Activated CD4-positive, alpha-beta T cell treated with anti-CD3 and anti-CD28 coated beads, Interleukin-2, amount 10 ng/mL, durations not matched to agents 24 days and 14 days (primary cell): ENCODE measurements at regions of chr22 and their contacts with region 1.

Region 1: DNA sequence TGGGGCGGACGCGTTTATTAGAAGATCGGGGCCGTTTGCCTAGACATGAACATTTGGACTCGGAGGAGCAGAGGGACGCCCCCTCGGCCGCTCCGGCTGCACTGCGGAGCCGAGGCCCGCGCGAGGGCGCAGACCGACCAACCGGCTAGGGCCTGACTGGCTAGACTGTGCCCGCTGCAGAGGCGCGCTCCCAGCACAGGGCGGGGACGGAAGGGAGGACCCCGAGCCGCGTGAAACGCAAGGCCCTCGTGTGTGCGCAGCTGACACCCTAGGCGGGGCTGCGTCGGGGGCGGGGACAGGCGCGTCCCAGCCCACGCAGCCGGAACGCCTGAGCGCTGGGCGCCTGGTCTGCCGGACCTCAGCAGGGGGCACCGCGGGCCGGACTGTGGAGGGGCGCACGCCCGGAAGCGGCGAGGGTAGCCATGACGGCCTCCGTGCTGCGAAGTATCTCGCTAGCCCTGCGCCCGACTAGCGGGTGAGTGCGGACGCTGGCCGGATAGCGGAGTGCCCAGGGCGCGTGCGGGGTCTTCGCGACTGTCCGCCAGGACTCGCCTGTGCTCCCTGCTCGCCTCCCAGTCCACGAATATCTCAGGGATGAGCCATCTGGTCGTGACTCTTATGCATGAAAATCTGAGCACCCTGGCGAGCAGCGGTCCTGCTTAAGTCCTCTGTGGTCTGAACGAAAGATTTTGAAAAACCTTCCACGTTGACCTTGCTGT is at the start of gene MRPL40:
- DNase-seq: peak; percentile 97
- H3K4me3 Mint-ChIP-seq: peak within 1 kb of the TSS; percentile 92
- H3K27ac Mint-ChIP-seq: peak within 1 kb of the TSS; percentile 96
- H3K4me1 Mint-ChIP-seq: peaks cover 33% of the 10 kb centered on the region
- H3K27me3 Mint-ChIP-seq: no peaks in the 10 kb centered on the region
- total RNA-seq, gene MRPL40: 35.2 and 37.6 TPM in 2 replicates

Region 2: DNA sequence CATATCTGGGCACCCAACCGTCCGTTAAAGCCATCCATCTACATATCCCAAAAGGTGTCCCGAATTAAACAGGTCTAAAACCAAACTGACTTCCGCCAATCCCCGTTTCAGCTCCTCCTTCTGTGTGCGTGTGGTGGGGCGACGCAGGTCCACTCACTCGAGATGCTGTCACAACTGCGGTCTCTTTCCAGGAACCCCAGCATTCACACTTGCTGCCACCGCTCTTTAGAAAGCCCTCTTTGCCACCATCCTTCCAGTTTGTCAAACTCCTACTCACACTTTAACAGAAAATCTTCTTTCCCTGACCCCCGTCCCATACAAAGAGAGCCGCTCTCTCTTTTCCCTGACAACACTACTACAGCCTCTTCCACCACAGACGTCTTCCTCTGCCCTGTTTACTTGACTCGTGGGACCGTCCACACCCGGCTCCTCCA is 288.3 kb before region 1 on chr22:
- intact Hi-C with region 1: loop called (anchors 1 kb)
- DNase-seq: peak; percentile 85
- H3K4me3 Mint-ChIP-seq: peak overlapping the region; percentile 96
- H3K27ac Mint-ChIP-seq: peak overlapping the region; percentile 94
- H3K4me1 Mint-ChIP-seq: peaks cover 13% of the 10 kb centered on the region
- H3K27me3 Mint-ChIP-seq: peaks cover 21% of the 10 kb centered on the region

Region 3: DNA sequence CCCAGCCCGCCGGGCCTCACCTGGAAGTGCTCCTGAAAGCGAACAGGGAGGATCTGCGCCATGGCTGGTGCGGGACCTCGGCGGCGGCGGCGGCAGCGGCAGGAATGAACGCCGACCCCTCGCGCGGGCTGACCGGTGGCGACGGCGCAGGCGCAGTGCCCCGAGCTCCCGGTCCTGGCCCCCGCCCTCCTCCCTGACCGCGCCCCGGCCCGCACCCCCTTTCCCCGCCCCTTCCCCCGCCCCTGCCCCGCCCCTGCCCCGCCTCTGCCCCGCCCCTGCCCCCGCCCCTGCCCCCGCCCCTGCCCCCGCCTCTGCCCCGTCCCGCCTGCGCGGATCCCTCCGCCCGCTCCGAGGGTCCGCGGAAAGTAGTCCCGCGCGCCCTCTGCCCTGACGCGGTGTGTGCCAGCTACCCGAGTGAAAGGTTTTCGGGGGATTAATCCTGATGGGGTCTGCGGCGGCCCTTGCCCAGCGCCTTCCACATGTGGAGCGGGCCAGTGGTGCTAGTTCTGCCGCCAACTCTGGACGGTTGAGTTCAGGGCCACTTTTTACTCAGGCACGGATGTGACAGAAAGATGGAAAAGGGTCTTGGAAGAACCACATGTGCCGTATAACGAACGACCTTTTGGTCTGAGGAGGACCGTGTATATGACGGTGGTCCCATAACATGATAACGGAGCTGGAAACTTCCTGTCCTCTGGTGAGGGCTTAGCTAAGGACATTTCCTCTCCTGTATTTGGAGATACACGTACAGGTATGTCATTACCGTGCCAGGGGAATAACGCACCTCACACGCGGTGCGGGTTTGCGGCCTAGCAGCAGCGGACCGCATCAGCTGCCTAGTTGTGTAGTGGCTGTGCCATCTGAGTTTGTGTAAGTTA is 140.5 kb before region 1 on chr22 and contains the start of gene CLTCL1:
- intact Hi-C with region 1: loop called (anchors 5 kb)
- DNase-seq: peak; percentile 92
- H3K4me3 Mint-ChIP-seq: peak within 1 kb of the TSS; percentile 92
- H3K27ac Mint-ChIP-seq: peak within 1 kb of the TSS; percentile 87
- H3K4me1 Mint-ChIP-seq: peaks cover 18% of the 10 kb centered on the region
- H3K27me3 Mint-ChIP-seq: peaks cover 47% of the 10 kb centered on the region
- total RNA-seq, gene CLTCL1: 0.43 and 1.3 TPM in 2 replicates

Region 4: DNA sequence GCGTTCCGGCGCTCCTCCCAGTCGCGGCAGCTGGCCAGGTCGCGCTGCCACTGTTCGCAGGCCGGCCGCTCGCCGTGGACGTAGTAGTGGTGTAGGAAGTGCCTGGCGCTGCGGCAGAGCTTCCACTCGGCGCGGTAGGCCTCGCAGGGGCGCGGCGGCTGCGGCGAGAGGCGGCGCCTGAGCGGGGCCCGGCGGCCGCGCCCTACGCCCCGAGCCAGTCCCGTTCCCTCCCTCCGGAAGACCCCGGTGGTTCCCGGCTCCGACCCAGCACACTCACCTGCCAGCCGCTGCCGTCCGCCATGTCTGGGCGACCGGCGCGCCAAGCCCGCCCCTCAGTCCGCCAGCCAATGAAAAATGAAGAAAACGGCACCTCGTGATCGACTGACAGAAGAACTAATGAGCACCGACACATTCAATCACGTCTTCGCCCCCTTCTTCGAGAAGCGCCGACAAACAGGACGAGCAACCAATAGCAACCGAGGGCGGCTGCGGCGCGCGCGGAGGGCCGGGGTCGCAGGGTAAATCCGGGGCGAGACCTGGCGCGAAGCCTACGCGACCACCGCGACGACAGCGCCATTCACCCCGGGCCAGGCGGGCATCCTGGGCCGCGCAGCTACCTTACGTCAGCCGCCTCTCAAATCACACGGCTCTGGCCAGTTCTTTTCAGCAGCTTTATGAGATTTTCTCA is 15.2 kb after region 1 on chr22 and contains the start of gene C22orf39:
- intact Hi-C with region 1: loop called (anchors 1 kb)
- DNase-seq: peak; percentile 97
- H3K4me3 Mint-ChIP-seq: peak within 1 kb of the TSS; percentile 88
- H3K27ac Mint-ChIP-seq: peak within 1 kb of the TSS; percentile 94
- H3K4me1 Mint-ChIP-seq: peaks cover 35% of the 10 kb centered on the region
- H3K27me3 Mint-ChIP-seq: no peaks in the 10 kb centered on the region
- total RNA-seq, gene C22orf39: 25.7 and 28.5 TPM in 2 replicates

Region 5: DNA sequence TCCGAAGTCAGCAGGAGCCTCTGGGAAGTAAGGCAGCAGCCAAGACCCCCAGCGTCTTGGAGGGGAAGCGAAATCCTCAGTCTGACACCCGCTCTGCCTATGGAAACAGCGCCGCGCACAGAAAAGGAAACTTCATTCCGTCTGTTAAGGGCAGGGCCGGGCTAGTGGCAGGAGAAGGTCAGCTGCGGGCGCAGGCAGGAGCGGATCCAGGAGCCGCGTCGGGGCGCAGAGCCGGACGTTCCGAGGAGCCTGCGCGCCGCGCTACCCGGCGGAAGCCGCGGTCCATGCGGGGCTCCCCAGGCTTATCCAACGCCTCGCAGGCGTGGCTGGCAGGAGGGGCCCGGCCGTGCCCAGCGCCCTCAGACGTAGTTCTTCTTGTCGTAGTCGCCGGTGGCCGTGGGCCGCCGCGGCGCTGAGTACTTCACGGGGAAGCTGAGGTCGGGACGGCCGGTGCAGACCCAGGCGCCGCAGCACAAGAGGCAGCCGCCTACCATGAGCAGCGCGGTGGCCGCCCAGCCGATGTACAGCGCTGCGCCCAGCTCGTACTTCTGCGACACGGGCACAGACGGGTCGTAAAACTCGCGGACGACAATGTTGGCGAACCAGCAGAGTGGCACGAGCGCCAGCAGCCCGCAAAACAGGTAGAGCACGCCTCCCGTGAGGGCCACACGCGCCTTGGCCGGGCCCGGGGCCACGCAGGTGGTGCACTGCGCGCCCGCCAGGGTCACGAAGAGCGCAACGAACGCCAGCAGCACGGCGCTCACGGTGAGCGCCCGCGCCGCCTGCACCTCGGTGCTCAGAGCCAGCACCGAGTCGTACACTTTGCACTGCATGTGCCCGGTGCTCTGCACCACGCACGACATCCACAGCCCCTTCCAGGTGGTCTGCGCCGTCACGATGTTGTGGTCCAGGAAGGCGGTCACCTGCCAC is 91.2 kb after region 1 on chr22:
- intact Hi-C with region 1: no loop called
- DNase-seq: peak; percentile 81
- H3K4me3 Mint-ChIP-seq: peak overlapping the region; percentile 78
- H3K27ac Mint-ChIP-seq: peak overlapping the region; percentile 48
- H3K4me1 Mint-ChIP-seq: peaks cover 7% of the 10 kb centered on the region
- H3K27me3 Mint-ChIP-seq: peaks cover 19% of the 10 kb centered on the region

Region 6: GRCh38 chr22:20916983-20917810 is 1484.9 kb after region 1 on chr22 and contains the start of gene CRKL:
- intact Hi-C with region 1: loop called (anchors 5 kb)
- DNase-seq: peak; percentile 99
- H3K4me3 Mint-ChIP-seq: peak within 1 kb of the TSS; percentile 94
- H3K27ac Mint-ChIP-seq: peak within 1 kb of the TSS; percentile 90
- H3K4me1 Mint-ChIP-seq: peaks cover 27% of the 10 kb centered on the region
- H3K27me3 Mint-ChIP-seq: no peaks in the 10 kb centered on the region
- total RNA-seq, gene CRKL: 81.4 and 82.4 TPM in 2 replicates